Endothelial cell of umbilical vein (primary cell): ENCODE measurements at regions of chr11 and their contacts with region 1.

Region 1: DNA sequence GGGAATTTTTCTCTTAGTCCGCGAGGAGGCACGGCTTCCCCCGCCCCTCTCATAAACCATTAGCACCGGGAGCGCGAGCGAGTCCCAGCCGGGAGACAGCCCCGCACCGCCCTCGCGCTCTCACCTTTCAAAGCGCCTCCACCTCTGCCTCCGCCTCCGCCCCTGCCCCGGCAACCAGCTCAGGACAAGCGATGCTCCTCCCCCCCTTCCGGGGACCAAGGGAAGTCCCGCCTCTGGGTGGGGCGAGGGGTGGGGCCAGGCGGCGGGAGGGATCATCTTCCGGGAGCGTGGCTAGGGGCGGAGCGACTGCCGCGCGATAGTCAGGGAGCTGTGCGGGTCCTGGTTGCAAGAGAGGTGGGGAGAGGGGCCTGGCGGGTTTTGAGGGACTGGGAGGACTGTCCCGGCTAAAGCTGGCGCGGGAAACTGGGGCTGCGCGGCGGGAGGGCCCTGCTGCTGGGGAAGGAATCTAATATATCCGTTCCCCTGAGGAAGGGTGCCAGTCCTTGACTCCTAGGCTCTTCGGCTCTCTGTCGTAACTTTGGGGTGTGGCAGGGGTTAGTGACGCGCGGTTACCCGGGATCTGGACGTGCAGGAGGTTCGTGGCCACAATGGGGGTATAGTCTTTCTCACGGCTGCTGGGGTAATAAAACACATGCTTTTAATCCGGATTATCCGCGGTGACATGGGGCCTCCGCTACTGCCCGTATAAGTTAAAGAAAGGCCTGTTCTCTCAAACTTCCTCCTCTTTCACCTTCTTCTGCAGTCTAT is at the starts of genes CCDC82 and JRKL:
- DNase-seq: peak; percentile 96
- H3K4me3 ChIP-seq: peak within 1 kb of the TSS; percentile 84 to 98 (median 94)
- H3K27ac ChIP-seq: peak within 1 kb of the TSS; percentile 61
- H3K4me1 ChIP-seq: peaks cover 19% of the 10 kb centered on the region
- H3K27me3 ChIP-seq: no peaks in the 10 kb centered on the region
- CTCF ChIP-seq: no peak
- POLR2A ChIP-seq: no peak
- total RNA-seq, gene CCDC82: 32.8 and 33.4 TPM in 2 replicates
- total RNA-seq, gene JRKL: 7.0 and 7.6 TPM in 2 replicates

Region 2: DNA sequence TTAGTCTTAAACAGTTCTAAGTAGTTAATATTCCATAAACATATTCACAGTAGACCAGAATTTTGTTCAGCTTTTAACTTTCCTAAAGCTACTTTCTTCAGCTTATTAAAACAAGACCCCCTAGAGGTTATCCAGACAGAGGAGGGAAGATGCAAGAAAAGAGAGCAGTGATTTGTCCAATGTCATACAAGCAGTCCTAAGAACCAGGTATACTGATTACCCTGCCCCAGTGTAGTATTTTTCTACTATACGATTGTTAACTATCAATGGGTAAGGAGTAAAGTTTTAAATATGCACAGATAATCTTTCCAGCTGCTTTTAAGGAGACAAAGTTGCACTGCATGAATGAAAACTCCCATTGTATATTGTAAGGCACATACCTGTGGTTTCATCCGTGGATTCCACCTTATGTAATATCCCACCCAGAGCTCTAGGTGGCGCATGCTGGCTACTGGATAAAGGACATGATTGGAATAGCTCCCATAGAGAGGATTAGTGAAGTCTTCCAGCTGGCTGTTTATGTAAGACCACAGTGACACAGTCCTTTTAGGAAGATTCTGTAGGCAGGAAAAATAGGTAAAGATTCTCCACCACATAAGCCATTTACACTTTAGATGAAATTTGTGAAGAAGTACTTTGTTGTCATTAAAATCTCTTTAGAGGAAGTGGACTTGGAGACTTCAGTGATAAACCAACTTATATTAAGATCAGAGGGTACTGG is 554.0 kb before region 1 on chr11:
- CTCF ChIA-PET with region 1: interaction called, 145 read pairs
- POLR2A ChIA-PET with region 1: interaction called, 8 read pairs
- dilution Hi-C with region 1: no loop called
- intact Hi-C with region 1: loop called (anchors 1 kb)
- DNase-seq: peak; percentile 77
- H3K4me3 ChIP-seq: no peak overlapping the region
- H3K27ac ChIP-seq: no peak overlapping the region
- H3K4me1 ChIP-seq: no peaks in the 10 kb centered on the region
- H3K27me3 ChIP-seq: no peaks in the 10 kb centered on the region
- CTCF ChIP-seq: peak; percentile 71 to 88
- POLR2A ChIP-seq: no peak

Region 3: DNA sequence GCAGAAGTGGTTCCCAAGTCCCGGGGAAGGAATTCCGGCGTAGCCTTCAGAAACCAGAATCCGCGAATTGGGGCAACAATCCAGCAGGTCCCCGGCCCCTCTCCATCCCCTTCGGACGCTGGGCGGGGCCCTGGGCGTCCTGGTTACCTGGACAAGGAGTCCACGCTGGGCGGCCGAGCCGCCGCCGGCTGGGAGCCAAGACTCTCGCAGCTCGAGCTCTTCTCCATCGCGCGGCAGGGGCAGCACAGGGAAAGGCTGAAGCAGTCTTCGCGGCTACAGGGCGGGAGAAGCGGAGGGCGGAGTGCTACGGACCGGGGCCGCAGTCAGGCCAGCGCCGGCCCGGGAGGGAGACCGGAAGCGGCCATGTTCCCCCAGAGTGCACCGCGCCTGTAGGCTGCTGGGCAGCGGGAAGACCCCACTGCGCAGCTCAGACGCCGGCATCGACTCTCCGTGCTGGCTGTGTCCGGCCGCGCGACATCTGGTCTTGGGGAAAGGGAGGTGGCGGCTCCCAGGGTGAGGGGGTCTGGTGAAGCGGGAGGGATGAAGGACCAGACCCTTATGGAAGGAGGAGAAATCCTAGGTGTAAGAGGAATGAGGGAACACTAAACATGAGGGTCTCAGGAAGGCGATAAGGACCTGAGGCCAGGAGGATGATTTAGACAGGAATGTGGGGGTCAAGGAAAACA is 466.0 kb before region 1 on chr11 and contains the start of gene MTMR2:
- CTCF ChIA-PET with region 1: interaction called, 9 read pairs
- POLR2A ChIA-PET with region 1: no interaction called
- dilution Hi-C with region 1: no loop called
- intact Hi-C with region 1: loop called (anchors 1 kb)
- DNase-seq: peak; percentile 82
- H3K4me3 ChIP-seq: peak within 1 kb of the TSS; percentile 92 to 99 (median 98)
- H3K27ac ChIP-seq: peak within 1 kb of the TSS; percentile 75
- H3K4me1 ChIP-seq: peaks cover 32% of the 10 kb centered on the region
- H3K27me3 ChIP-seq: no peaks in the 10 kb centered on the region
- CTCF ChIP-seq: no peak
- POLR2A ChIP-seq: peak; percentile 97
- total RNA-seq, gene MTMR2: 46.4 and 49.5 TPM in 2 replicates

Region 4: GRCh38 chr11:96045622-96046456 is 344.1 kb before region 1 on chr11:
- CTCF ChIA-PET with region 1: interaction called, 12 read pairs
- POLR2A ChIA-PET with region 1: no interaction called
- dilution Hi-C with region 1: no loop called
- intact Hi-C with region 1: no loop called
- DNase-seq: peak; percentile 47
- H3K4me3 ChIP-seq: no peak overlapping the region
- H3K27ac ChIP-seq: peak overlapping the region; percentile 9
- H3K4me1 ChIP-seq: peaks cover 6% of the 10 kb centered on the region
- H3K27me3 ChIP-seq: no peaks in the 10 kb centered on the region
- CTCF ChIP-seq: peak in 1 of 2 donors; percentile 14
- POLR2A ChIP-seq: no peak

Region 5: GRCh38 chr11:96102664-96103078 is 287.2 kb before region 1 on chr11:
- CTCF ChIA-PET with region 1: no interaction called
- POLR2A ChIA-PET with region 1: no interaction called
- dilution Hi-C with region 1: no loop called
- intact Hi-C with region 1: loop called (anchors 1 kb)
- DNase-seq: peak; percentile 55
- H3K4me3 ChIP-seq: no peak overlapping the region
- H3K27ac ChIP-seq: peak overlapping the region; percentile 74
- H3K4me1 ChIP-seq: peaks cover 30% of the 10 kb centered on the region
- H3K27me3 ChIP-seq: no peaks in the 10 kb centered on the region
- CTCF ChIP-seq: no peak
- POLR2A ChIP-seq: no peak

Region 6: DNA sequence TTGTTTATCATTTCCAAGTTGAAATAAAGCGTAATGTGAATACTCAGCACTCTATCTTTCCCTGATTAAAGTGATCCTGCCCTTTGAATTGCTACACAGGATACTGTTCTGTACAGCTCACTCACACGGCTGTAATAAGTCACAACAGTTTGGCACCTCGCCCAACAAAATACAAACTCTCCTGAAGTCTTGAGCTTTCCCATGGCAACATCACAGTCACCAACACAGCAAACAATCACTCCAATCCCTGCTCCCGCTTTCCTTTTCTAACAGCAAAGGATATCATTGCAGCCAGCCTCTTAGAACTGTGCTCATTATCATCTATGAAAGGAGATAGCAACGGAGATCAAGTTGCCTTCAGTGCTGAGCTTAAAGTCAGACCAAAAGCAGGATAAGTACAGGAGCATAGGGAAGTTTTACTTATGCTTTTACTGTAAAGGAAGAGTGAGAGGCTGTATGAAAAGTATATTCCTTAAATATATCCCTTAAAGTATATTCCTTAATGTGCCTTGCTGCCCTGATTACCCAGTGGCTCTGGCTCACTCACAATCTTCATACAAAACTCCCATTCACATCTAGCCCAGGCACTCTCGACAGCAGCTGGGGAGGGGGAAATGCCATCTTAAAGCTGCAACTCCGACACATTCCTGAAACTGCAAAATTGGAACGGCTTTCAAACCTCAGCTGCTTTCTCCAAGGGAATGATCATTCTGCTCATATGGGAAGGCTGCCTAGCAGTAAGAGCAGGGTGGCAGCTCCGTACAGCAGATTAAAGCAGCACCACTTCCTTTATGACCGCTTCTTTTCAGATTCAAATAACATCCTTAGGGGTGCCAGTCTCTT is 82.8 kb before region 1 on chr11:
- CTCF ChIA-PET with region 1: interaction called, 5 read pairs
- POLR2A ChIA-PET with region 1: no interaction called
- dilution Hi-C with region 1: no loop called
- intact Hi-C with region 1: loop called (anchors 2 kb)
- DNase-seq: peak; percentile 99
- H3K4me3 ChIP-seq: peak overlapping the region in 2 of 3 experiments; percentile 8 to 24
- H3K27ac ChIP-seq: peak overlapping the region; percentile 98
- H3K4me1 ChIP-seq: peaks cover 84% of the 10 kb centered on the region
- H3K27me3 ChIP-seq: no peaks in the 10 kb centered on the region
- CTCF ChIP-seq: no peak
- POLR2A ChIP-seq: peak; percentile 52